CD8-positive, alpha-beta T cell (primary cell): ENCODE measurements at regions of chr17 and their contacts with region 1.

Region 1: DNA sequence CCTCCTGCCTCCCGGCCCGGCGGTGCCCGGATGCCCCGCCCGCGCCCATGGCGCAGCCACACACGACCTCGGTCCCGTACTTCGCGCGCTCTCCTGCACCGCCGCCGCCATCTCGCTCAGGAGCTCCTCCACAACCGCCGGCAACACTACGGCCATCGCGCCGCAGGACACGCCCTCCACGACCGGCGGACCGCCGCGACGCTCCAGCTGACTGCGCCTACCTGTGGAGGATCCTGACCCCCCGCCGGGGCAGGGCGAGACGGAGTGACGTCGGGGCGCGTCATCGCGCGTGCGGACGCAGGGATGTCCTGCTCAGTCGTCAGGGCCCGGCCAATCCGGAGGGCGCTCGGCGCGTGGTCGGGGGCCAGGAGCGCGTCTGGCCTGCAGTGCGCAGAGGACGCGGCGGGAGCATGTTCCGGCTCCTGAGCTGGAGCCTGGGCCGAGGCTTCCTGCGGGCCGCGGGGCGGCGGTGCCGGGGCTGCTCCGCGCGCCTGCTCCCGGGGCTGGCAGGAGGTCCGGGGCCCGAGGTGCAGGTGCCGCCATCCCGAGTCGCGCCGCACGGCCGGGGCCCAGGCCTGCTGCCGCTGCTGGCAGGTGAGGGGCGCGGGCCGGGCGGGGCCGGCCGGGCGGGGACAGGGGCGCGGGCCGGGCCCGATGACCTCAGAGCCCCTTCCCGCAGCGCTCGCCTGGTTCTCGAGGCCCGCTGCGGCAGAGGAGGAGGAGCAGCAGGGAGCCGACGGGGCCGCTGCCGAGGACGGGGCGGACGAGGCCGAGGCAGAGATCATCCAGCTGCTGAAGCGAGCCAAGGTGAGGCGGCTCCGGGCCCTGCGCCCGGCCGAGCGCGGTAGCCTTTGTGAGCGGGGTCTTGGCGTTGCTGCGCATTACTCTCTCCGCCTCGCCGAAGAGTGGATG is at the starts of genes TTC19 and ZSWIM7:
- DNase-seq: peak; percentile 83 to 96 (median 94)
- ATAC-seq: peak; percentile 81
- H3K4me3 ChIP-seq: peak within 1 kb of the TSS; percentile 66 to 93
- H3K4me3 Mint-ChIP-seq: peak within 1 kb of the TSS; percentile 94
- H3K27ac ChIP-seq: peak within 1 kb of the TSS; percentile 89 to 93
- H3K27ac Mint-ChIP-seq: peak within 1 kb of the TSS; percentile 98
- H3K4me1 ChIP-seq: peaks cover 21% of the 10 kb centered on the region
- H3K4me1 Mint-ChIP-seq: peaks cover 38% of the 10 kb centered on the region
- H3K27me3 ChIP-seq: no peaks in the 10 kb centered on the region
- H3K27me3 Mint-ChIP-seq: no peaks in the 10 kb centered on the region
- CTCF ChIP-seq: no peak
- total RNA-seq, gene TTC19: 63.5 to 71.9 TPM
- total RNA-seq, gene ZSWIM7: 10.3 to 10.8 TPM

Region 2: DNA sequence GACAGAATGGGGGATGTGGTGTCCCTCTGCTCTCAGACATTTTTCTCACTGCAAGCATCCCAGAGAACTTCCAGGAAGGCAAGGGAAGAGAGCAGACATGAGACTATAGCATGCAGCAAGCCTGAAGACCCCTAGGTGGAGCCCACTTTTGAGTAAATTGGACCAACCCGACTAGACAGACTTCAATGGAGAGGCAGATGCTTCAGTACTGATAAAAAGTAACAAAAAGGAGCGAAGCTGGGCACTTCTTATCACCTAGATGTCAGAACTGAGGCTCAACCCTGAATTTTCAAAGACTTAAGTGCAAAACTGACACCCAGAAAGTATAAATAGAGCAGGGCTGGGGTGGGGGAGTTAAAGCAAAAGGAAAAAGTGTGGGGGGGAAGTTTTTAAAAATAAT is 865.3 kb before region 1 on chr17:
- CTCF ChIA-PET with region 1: no interaction called
- POLR2A ChIA-PET with region 1: no interaction called
- intact Hi-C with region 1: no loop called
- DNase-seq: no peak
- ATAC-seq: no peak
- H3K4me3 ChIP-seq: no peak overlapping the region
- H3K4me3 Mint-ChIP-seq: no peak overlapping the region
- H3K27ac ChIP-seq: no peak overlapping the region
- H3K27ac Mint-ChIP-seq: no peak overlapping the region
- H3K4me1 ChIP-seq: no peaks in the 10 kb centered on the region
- H3K4me1 Mint-ChIP-seq: no peaks in the 10 kb centered on the region
- H3K27me3 ChIP-seq: no peaks in the 10 kb centered on the region
- H3K27me3 Mint-ChIP-seq: peaks cover 2% of the 10 kb centered on the region
- CTCF ChIP-seq: no peak

Region 3: GRCh38 chr17:15257258-15257788 is 742.4 kb before region 1 on chr17:
- CTCF ChIA-PET with region 1: interaction called, 4 read pairs
- POLR2A ChIA-PET with region 1: no interaction called
- intact Hi-C with region 1: loop called in 1 of 2 experiments (anchors 2 kb)
- DNase-seq: peak; percentile 14 to 74 (median 48)
- ATAC-seq: peak; percentile 55
- H3K4me3 ChIP-seq: no peak overlapping the region
- H3K4me3 Mint-ChIP-seq: no peak overlapping the region
- H3K27ac ChIP-seq: no peak overlapping the region
- H3K27ac Mint-ChIP-seq: no peak overlapping the region
- H3K4me1 ChIP-seq: peaks cover 11% of the 10 kb centered on the region
- H3K4me1 Mint-ChIP-seq: peaks cover 20% of the 10 kb centered on the region
- H3K27me3 ChIP-seq: peaks cover 2 to 9% of the 10 kb centered on the region in 2 experiments
- H3K27me3 Mint-ChIP-seq: peaks cover 60% of the 10 kb centered on the region
- CTCF ChIP-seq: peak; percentile 80

Region 4: DNA sequence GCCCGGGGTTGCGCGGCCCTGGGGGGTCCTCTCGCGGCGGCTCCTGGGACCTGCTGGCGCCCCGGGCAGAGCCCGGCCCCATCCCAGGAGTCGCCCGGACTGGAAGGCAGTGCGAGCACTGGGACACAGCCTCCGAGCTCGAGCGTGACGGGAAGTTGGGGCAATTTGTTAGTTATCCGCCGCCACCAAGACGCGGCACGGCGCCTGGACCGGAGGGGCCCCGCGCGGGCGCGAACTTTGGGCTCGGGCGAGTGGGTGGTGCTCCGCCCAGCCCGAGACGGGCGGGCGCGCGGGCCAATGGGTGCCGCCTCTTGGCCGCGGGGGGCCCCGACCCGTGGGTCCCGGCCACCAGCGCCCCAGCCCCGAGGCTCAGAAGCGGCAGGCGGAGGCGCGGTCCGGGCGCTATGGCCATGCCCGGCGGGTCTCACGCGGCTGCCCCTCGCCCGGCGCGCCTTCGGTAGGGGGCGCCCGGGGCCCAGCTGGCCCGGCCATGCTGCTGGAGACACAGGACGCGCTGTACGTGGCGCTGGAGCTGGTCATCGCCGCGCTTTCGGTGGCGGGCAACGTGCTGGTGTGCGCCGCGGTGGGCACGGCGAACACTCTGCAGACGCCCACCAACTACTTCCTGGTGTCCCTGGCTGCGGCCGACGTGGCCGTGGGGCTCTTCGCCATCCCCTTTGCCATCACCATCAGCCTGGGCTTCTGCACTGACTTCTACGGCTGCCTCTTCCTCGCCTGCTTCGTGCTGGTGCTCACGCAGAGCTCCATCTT is 54.8 kb before region 1 on chr17 and contains the start of gene ADORA2B:
- CTCF ChIA-PET with region 1: interaction called, 4 read pairs
- POLR2A ChIA-PET with region 1: no interaction called
- intact Hi-C with region 1: loop called in 1 of 2 experiments (anchors 1 kb)
- DNase-seq: peak in 7 of 9 experiments; percentile 14 to 65 (median 31)
- ATAC-seq: peak; percentile 55
- H3K4me3 ChIP-seq: peak within 1 kb of the TSS; percentile 46 to 72
- H3K4me3 Mint-ChIP-seq: peak within 1 kb of the TSS; percentile 84
- H3K27ac ChIP-seq: no peak within 1 kb of the TSS
- H3K27ac Mint-ChIP-seq: no peak within 1 kb of the TSS
- H3K4me1 ChIP-seq: peaks cover 6% of the 10 kb centered on the region
- H3K4me1 Mint-ChIP-seq: peaks cover 10% of the 10 kb centered on the region
- H3K27me3 ChIP-seq: peaks cover 10 to 13% of the 10 kb centered on the region in 2 experiments
- H3K27me3 Mint-ChIP-seq: peaks cover 34% of the 10 kb centered on the region
- CTCF ChIP-seq: no peak
- total RNA-seq, gene ADORA2B: not detected